ENCODE measurements at regions of chr3 and their contacts with region 1.

Region 1: DNA sequence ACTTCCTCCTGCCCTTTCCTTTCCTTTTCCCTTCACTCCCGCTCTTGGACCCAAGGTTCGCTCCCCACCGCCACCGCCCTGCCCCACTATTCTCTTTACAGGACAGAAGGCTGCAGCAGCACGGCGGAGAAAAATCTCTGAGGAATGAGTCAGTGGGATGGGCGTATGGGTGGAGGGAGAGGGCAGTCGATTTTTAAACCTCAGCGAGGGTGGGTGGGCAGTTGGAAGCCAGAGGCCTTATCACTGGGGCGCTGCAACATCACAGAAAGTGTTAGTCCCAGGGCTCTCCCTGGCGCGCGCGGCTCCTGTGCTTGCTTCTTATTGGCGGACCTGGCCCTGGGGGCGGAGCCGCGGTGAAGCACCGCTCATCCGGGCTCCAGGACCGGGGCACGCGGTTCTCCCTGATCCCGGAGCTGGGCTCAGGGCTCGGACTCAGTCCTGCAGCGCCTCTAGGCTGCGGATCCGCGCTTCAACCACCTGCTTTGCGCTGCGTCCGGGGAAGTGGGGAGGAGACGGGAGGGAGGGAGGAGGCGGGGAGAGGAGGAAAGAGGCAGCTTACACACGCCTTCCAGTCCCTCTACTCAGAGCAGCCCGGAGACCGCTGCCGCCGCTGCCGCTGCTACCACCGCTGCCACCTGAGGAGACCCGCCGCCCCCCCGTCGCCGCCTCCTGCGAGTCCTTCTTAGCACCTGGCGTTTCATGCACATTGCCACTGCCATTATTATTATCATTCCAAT is at the start of gene ALCAM:
- DNase-seq: peak; percentile 82 to 98
- ATAC-seq: peak; percentile 72 to 88
- H3K4me3 ChIP-seq: peak within 1 kb of the TSS; percentile 88
- H3K27ac ChIP-seq: peak within 1 kb of the TSS; percentile 89 to 92
- H3K4me1 ChIP-seq: peaks cover 46% of the 10 kb centered on the region
- CTCF ChIP-seq: peak; percentile 78
- EP300 ChIP-seq: 0 out of 5 replicates have a peak, but pooled peaks of 1 of the 2 experiments have one; percentile 2
- POLR2A ChIP-seq: peak; percentile 84
- RAD21 ChIP-seq: peak; percentile 80 to 95
- polyA plus RNA-seq, gene ALCAM: 145 and 170 TPM in 2 replicates

Region 2: DNA sequence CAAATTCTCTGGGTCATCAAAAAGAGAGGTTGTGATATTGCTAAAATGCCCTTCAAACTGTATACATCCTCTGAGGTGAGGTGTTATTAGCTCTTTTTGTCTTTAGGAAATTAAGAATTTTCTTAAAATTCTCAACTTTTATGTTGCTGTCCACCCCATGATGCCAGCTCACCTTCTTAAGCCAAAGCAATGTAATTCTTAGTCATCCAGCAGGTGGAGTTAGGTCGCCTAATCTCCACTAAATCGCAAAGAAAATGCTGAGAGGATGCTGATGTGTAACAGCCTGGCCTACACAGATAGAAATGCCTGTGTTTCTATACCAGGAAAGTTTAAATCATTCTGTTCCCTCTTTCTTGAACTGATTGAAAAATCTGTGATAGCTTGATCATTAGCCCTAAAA is 769.9 kb before region 1 on chr3:
- CTCF ChIA-PET with region 1: interaction called, 19 read pairs
- POLR2A ChIA-PET with region 1: interaction called, 7 read pairs
- DNase-seq: peak; percentile 13 to 59
- ATAC-seq: peak; percentile 86 to 93; a peak in 5 of 6 replicates
- H3K4me3 ChIP-seq: no peak overlapping the region
- H3K27ac ChIP-seq: no peak overlapping the region
- H3K4me1 ChIP-seq: no peaks in the 10 kb centered on the region
- CTCF ChIP-seq: peak; percentile 57
- EP300 ChIP-seq: no peak
- POLR2A ChIP-seq: no peak
- RAD21 ChIP-seq: peak; percentile 59 to 64

Region 3: GRCh38 chr3:105355408-105356061 is 11.0 kb before region 1 on chr3:
- CTCF ChIA-PET with region 1: interaction called, 19 read pairs
- POLR2A ChIA-PET with region 1: no interaction called
- DNase-seq: no peak
- ATAC-seq: no peak; a peak in 1 of 6 replicates
- H3K4me3 ChIP-seq: no peak overlapping the region
- H3K27ac ChIP-seq: peak overlapping the region; percentile 3 to 9; a peak in 1 of 6 replicates
- H3K4me1 ChIP-seq: peaks cover 27% of the 10 kb centered on the region
- CTCF ChIP-seq: no peak
- EP300 ChIP-seq: no peak
- POLR2A ChIP-seq: no peak
- RAD21 ChIP-seq: no peak

Region 4: GRCh38 chr3:105377716-105378115 is 11.2 kb after region 1 on chr3:
- CTCF ChIA-PET with region 1: interaction called, 27 read pairs
- POLR2A ChIA-PET with region 1: no interaction called
- DNase-seq: no peak
- ATAC-seq: no peak
- H3K4me3 ChIP-seq: no peak overlapping the region
- H3K27ac ChIP-seq: no peak overlapping the region
- H3K4me1 ChIP-seq: peaks cover 21% of the 10 kb centered on the region; the same call in 2 of the 3 replicates
- CTCF ChIP-seq: no peak
- EP300 ChIP-seq: no peak
- POLR2A ChIP-seq: no peak
- RAD21 ChIP-seq: no peak

Region 5: DNA sequence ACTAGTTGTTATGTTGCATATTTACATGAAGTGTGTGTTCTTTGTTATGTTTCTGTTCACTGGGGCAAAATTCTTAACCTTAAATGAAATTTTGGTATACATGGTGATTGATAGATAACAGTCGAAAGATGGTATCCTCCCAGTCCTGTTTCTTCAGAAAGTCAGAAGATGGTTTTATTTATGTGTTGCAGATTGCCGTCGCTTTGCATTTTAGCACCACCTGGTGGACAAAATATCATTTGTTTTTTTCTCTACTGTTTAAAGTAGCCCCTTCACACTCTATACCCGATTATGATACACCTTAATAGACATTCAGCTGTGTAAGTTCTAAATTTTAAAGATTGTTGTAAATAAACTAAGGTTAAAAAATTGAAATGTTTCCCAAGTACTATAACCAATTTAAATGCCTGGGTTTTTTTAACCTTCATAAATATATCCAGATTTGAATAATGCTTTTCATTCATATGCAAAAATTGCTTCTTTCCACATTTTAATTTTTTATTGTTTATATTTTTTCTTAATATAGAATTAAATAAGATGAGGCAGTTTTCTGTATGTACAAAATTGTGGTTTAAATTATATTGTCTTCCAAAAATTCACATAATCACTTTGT is 152.4 kb after region 1 on chr3:
- CTCF ChIA-PET with region 1: interaction called, 47 read pairs
- POLR2A ChIA-PET with region 1: interaction called, 8 read pairs
- DNase-seq: peak; percentile 19 to 74
- ATAC-seq: peak; percentile 85 to 95
- H3K4me3 ChIP-seq: no peak overlapping the region
- H3K27ac ChIP-seq: no peak overlapping the region
- H3K4me1 ChIP-seq: peaks cover 57% of the 10 kb centered on the region
- CTCF ChIP-seq: peak; percentile 86
- EP300 ChIP-seq: no peak
- POLR2A ChIP-seq: no peak
- RAD21 ChIP-seq: peak; percentile 92 to 95

Region 6: GRCh38 chr3:105527949-105528348 is 161.5 kb after region 1 on chr3:
- CTCF ChIA-PET with region 1: interaction called, 11 read pairs
- POLR2A ChIA-PET with region 1: no interaction called
- DNase-seq: peak in 1 of 2 experiments; percentile 22
- ATAC-seq: no peak
- H3K4me3 ChIP-seq: no peak overlapping the region
- H3K27ac ChIP-seq: no peak overlapping the region; a peak in 1 of 6 replicates
- H3K4me1 ChIP-seq: peaks cover 46% of the 10 kb centered on the region
- CTCF ChIP-seq: no peak
- EP300 ChIP-seq: no peak
- POLR2A ChIP-seq: no peak
- RAD21 ChIP-seq: no peak